ENCODE measurements at regions of chr6 and their contacts with region 1.

Region 1: DNA sequence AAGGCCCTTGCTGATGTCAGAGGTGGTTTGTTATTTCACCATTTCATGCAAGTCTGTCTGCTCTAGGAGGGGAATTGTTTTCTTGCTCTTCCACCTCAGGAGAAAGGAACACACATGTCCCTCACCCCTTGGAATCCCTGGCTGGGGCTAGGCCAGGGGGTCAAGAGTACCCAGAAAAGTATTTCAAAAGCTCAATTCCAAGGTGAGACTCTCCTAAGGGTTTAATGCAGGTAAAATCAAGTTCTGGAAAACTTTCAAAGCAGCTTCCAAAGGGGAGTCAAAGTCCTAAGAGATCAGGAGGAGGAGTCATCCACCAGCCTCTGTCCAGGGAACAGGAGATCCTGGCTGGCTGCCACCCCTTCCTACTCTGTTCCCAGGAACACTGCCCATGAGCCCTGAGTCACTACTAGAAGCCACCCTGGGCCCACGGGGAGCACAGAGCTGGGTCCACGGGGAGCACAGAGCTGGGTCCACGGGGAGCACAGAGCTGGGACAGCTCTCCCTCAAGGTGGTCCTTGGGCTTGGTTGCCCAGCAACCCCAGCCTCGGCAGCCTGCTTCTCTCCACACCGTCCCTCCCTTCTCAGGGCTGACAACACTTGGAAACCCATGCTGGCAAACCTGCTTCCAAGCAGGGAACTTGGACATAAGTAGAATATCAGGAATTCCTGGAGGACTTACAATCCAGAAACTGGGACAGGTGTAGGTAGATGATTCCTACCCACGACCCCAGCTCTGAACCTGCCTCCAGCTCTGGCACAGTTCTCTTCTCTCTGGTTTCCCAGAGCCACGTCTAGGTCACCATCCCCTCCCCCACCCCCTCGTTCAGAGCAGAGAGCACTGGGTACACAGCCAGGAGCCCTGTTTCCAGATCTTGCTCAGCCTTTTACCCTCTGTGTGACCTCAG is 35.3 kb upstream of the CDKN1A start:
- DNase-seq: no peak
- ATAC-seq: no peak
- H3K4me3 ChIP-seq: no peak overlapping the region
- H3K4me3 Mint-ChIP-seq: no peak overlapping the region
- H3K27ac ChIP-seq: no peak overlapping the region
- H3K27ac Mint-ChIP-seq: no peak overlapping the region
- H3K4me1 ChIP-seq: no peaks in the 10 kb centered on the region
- H3K4me1 Mint-ChIP-seq: no peaks in the 10 kb centered on the region
- H3K27me3 ChIP-seq: no peaks in the 10 kb centered on the region
- H3K27me3 Mint-ChIP-seq: no peaks in the 10 kb centered on the region
- CTCF ChIP-seq: no peak

Region 2: DNA sequence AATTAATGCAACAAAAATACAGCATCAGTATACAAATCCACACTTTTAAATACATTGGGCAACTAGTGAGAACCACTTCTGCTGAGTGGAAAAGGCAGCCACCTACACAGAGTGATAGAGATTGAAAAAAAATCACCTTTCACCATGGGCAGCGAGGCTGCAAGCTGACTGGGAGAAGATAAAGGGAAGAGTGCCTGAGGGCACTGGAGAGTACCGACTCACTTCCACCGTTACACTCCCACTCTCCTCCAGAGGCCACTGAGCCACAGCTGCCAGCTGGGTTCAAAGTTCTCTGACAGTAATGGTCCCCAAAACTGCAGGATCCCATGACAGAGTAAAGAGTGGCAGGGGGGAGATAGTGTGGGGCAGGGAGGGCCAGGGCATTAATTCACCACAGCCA is 224.6 kb before region 1 on chr6:
- CTCF ChIA-PET with region 1: no interaction called
- POLR2A ChIA-PET with region 1: no interaction called
- intact Hi-C with region 1: no loop called
- DNase-seq: no peak
- ATAC-seq: no peak
- H3K4me3 ChIP-seq: no peak overlapping the region
- H3K4me3 Mint-ChIP-seq: no peak overlapping the region
- H3K27ac ChIP-seq: no peak overlapping the region
- H3K27ac Mint-ChIP-seq: no peak overlapping the region
- H3K4me1 ChIP-seq: peaks cover 8% of the 10 kb centered on the region
- H3K4me1 Mint-ChIP-seq: peaks cover 7% of the 10 kb centered on the region
- H3K27me3 ChIP-seq: no peaks in the 10 kb centered on the region
- H3K27me3 Mint-ChIP-seq: no peaks in the 10 kb centered on the region
- CTCF ChIP-seq: no peak

Region 3: GRCh38 chr6:36428911-36429310 is 214.3 kb before region 1 on chr6:
- CTCF ChIA-PET with region 1: no interaction called
- POLR2A ChIA-PET with region 1: no interaction called
- intact Hi-C with region 1: loop called in 1 of 2 experiments (anchors 1 kb)
- DNase-seq: no peak
- ATAC-seq: no peak
- H3K4me3 ChIP-seq: no peak overlapping the region
- H3K4me3 Mint-ChIP-seq: no peak overlapping the region
- H3K27ac ChIP-seq: no peak overlapping the region
- H3K27ac Mint-ChIP-seq: no peak overlapping the region
- H3K4me1 ChIP-seq: peaks cover under 1% of the 10 kb centered on the region
- H3K4me1 Mint-ChIP-seq: peaks cover under 1% of the 10 kb centered on the region
- H3K27me3 ChIP-seq: no peaks in the 10 kb centered on the region
- H3K27me3 Mint-ChIP-seq: no peaks in the 10 kb centered on the region
- CTCF ChIP-seq: no peak